ENCODE measurements at regions of chr12 and their contacts with region 1.

Region 1: GRCh38 chr12:12486661-12487240 is 75.9 kb downstream of the DUSP16 start:
- DNase-seq: no peak
- ATAC-seq: no peak
- H3K4me3 ChIP-seq: no peak overlapping the region
- H3K4me3 Mint-ChIP-seq: no peak overlapping the region
- H3K27ac ChIP-seq: peak overlapping the region in 1 of 2 donors; percentile 56
- H3K27ac Mint-ChIP-seq: peak overlapping the region; percentile 73
- H3K4me1 ChIP-seq: peaks cover 37% of the 10 kb centered on the region
- H3K4me1 Mint-ChIP-seq: peaks cover 51% of the 10 kb centered on the region
- H3K27me3 ChIP-seq: no peaks in the 10 kb centered on the region
- H3K27me3 Mint-ChIP-seq: no peaks in the 10 kb centered on the region
- CTCF ChIP-seq: no peak

Region 2: DNA sequence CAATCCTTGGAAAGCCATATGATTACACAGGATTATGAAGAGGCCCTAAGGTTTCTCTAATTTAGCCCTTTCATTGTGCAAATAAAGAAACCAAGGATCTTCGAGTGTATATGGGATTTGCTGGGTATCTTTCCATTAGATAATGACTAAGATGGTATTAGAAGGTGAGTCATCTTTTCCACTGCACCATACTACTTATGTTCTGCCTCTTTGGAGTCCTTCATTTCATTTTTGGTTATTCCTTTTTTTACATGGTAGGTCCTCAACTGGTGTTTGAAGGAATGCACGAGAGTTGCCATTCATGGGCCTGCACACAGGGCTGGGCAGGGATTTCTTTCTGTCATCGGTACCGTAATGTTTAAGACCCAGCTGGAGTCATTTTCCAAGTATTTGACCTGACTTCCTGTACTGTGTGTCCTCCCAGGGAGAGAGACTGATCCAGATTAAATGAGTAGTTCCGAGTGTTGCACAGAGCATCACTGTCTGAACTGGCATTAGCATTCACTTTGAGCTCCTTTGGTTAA is 44.1 kb before region 1 on chr12:
- CTCF ChIA-PET with region 1: interaction called, 4 read pairs
- POLR2A ChIA-PET with region 1: interaction called, 56 read pairs
- intact Hi-C with region 1: loop called in 1 of 2 experiments (anchors 1 kb)
- DNase-seq: peak in 3 of 14 experiments; percentile 47 to 52 (median 52)
- ATAC-seq: peak; percentile 1
- H3K4me3 ChIP-seq: no peak overlapping the region
- H3K4me3 Mint-ChIP-seq: peak overlapping the region; percentile 45
- H3K27ac ChIP-seq: peak overlapping the region; percentile 83
- H3K27ac Mint-ChIP-seq: peak overlapping the region; percentile 95
- H3K4me1 ChIP-seq: peaks cover 74% of the 10 kb centered on the region
- H3K4me1 Mint-ChIP-seq: peaks cover 81% of the 10 kb centered on the region
- H3K27me3 ChIP-seq: no peaks in the 10 kb centered on the region
- H3K27me3 Mint-ChIP-seq: no peaks in the 10 kb centered on the region
- CTCF ChIP-seq: no peak

Region 3: DNA sequence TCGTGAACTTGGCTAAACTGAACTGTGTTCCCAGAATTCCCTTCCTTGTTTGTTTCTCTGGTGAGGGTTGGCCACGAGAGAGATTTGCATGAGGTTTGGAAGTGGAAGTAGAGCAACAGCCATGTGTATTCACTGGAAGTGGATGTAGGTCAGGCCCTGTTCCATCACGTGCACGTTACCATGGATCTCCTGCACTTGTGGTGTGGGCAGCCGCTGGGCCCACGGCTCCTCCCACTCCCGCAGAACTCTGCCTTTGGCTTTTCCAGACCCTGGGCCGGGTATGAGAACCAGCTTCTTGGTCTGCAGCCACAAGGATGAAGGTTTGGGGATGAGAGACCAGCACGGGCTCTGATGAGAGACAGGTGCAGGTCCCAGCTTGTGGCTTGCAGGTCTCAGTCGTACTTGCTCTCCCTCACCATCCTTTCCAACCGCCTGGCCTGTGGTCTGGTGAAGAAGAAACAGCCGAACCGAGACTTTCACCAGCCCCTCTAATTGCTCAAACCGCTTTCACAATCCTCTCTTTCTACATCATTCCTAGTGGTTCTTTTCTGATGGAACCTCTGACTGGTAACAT is 19.0 kb before region 1 on chr12:
- CTCF ChIA-PET with region 1: no interaction called
- POLR2A ChIA-PET with region 1: interaction called, 106 read pairs
- intact Hi-C with region 1: loop called in 1 of 2 experiments (anchors 1 kb)
- DNase-seq: peak in 11 of 14 experiments; percentile 15 to 87 (median 51)
- ATAC-seq: peak; percentile 23
- H3K4me3 ChIP-seq: no peak overlapping the region
- H3K4me3 Mint-ChIP-seq: peak overlapping the region; percentile 40
- H3K27ac ChIP-seq: peak overlapping the region; percentile 78 to 81
- H3K27ac Mint-ChIP-seq: peak overlapping the region; percentile 98
- H3K4me1 ChIP-seq: peaks cover 69% of the 10 kb centered on the region
- H3K4me1 Mint-ChIP-seq: peaks cover 79% of the 10 kb centered on the region
- H3K27me3 ChIP-seq: no peaks in the 10 kb centered on the region
- H3K27me3 Mint-ChIP-seq: no peaks in the 10 kb centered on the region
- CTCF ChIP-seq: no peak

Region 4: GRCh38 chr12:12540261-12541013 is 53.7 kb after region 1 on chr12:
- CTCF ChIA-PET with region 1: no interaction called
- POLR2A ChIA-PET with region 1: no interaction called
- intact Hi-C with region 1: loop called in 1 of 2 experiments (anchors 5 kb)
- DNase-seq: peak in 3 of 14 experiments; percentile 23 to 50 (median 30)
- ATAC-seq: peak; percentile 29
- H3K4me3 ChIP-seq: no peak overlapping the region
- H3K4me3 Mint-ChIP-seq: no peak overlapping the region
- H3K27ac ChIP-seq: no peak overlapping the region
- H3K27ac Mint-ChIP-seq: peak overlapping the region; percentile 42
- H3K4me1 ChIP-seq: peaks cover 10% of the 10 kb centered on the region
- H3K4me1 Mint-ChIP-seq: peaks cover 46% of the 10 kb centered on the region
- H3K27me3 ChIP-seq: no peaks in the 10 kb centered on the region
- H3K27me3 Mint-ChIP-seq: no peaks in the 10 kb centered on the region
- CTCF ChIP-seq: no peak

Region 5: GRCh38 chr12:12645485-12645884 is 158.7 kb after region 1 on chr12:
- CTCF ChIA-PET with region 1: no interaction called
- POLR2A ChIA-PET with region 1: no interaction called
- intact Hi-C with region 1: no loop called
- DNase-seq: peak in 12 of 14 experiments; percentile 4 to 79 (median 33)
- ATAC-seq: peak; percentile 91
- H3K4me3 ChIP-seq: no peak overlapping the region
- H3K4me3 Mint-ChIP-seq: no peak overlapping the region
- H3K27ac ChIP-seq: no peak overlapping the region
- H3K27ac Mint-ChIP-seq: peak overlapping the region; percentile 14
- H3K4me1 ChIP-seq: peaks cover 6% of the 10 kb centered on the region
- H3K4me1 Mint-ChIP-seq: peaks cover 6% of the 10 kb centered on the region
- H3K27me3 ChIP-seq: no peaks in the 10 kb centered on the region
- H3K27me3 Mint-ChIP-seq: no peaks in the 10 kb centered on the region
- CTCF ChIP-seq: peak; percentile 56

Region 6: GRCh38 chr12:12696562-12697383 is 210.0 kb after region 1 on chr12:
- CTCF ChIA-PET with region 1: interaction called, 3 read pairs
- POLR2A ChIA-PET with region 1: interaction called, 11 read pairs
- intact Hi-C with region 1: loop called in 1 of 2 experiments (anchors 5 kb)
- DNase-seq: peak; percentile 90 to 97 (median 92)
- ATAC-seq: peak; percentile 83
- H3K4me3 ChIP-seq: peak overlapping the region; percentile 61
- H3K4me3 Mint-ChIP-seq: peak overlapping the region; percentile 94
- H3K27ac ChIP-seq: peak overlapping the region; percentile 96 to 97
- H3K27ac Mint-ChIP-seq: peak overlapping the region; percentile 100
- H3K4me1 ChIP-seq: peaks cover 7% of the 10 kb centered on the region
- H3K4me1 Mint-ChIP-seq: peaks cover 41% of the 10 kb centered on the region
- H3K27me3 ChIP-seq: no peaks in the 10 kb centered on the region
- H3K27me3 Mint-ChIP-seq: no peaks in the 10 kb centered on the region
- CTCF ChIP-seq: no peak

Region 7: DNA sequence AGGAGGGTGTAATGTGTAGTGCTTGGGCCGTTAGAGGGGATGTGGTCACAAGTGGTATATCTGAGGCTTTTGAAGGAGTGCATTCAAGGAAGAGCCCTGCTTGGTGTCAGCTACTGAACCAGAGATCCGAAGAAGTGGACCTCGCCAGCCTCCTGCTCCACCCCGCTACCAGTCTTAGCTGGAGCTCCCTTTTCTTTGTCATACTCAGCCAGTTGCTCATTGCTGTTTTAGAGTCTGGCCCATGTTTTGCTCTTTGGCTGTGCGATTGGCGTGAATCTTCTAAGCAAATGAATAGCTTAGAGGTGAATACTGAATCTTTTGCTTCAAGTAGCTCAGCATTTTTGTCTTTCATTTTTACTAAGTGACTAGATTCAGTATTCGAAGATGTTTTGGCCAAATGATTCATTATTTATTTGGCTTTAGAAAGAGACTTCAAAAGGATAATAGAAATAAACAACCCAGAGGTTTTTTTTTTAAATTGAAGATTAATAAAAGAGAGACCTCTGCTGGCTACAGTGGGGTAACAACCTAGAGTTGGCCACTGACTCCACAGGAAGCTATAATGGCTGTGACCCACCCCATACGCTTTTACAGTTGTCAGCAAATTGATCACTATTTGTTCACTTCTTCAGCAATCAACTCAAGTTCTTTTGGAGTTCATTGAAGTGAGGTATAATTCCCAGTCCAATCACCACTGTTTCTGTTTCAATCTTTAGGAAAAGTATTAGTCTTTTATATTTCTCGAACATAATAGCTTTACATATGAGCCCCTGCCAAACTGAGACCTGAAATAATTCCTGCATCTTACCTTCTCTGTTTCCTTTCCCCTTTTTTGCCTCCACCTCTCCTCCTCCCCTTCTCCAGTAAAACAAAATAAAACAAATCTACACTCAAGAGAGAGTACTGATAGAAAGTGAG is 250.3 kb after region 1 on chr12:
- CTCF ChIA-PET with region 1: no interaction called
- POLR2A ChIA-PET with region 1: interaction called, 12 read pairs
- intact Hi-C with region 1: no loop called
- DNase-seq: peak in 13 of 14 experiments; percentile 15 to 87 (median 33)
- ATAC-seq: peak; percentile 82
- H3K4me3 ChIP-seq: peak overlapping the region; percentile 34
- H3K4me3 Mint-ChIP-seq: peak overlapping the region; percentile 58
- H3K27ac ChIP-seq: peak overlapping the region; percentile 34 to 40
- H3K27ac Mint-ChIP-seq: peak overlapping the region; percentile 85
- H3K4me1 ChIP-seq: peaks cover 30% of the 10 kb centered on the region
- H3K4me1 Mint-ChIP-seq: peaks cover 41% of the 10 kb centered on the region
- H3K27me3 ChIP-seq: no peaks in the 10 kb centered on the region
- H3K27me3 Mint-ChIP-seq: no peaks in the 10 kb centered on the region
- CTCF ChIP-seq: peak; percentile 71

Measured in CD4-positive, alpha-beta T cell (primary cell).